Esophagus squamous epithelium (tissue), 5 donors: ENCODE measurements at regions of chr9 and their contacts with region 1.

Region 1: GRCh38 chr9:34376596-34377403 is at the start of gene MYORG:
- DNase-seq: peak; percentile 89
- H3K4me3 ChIP-seq: peak within 1 kb of the TSS; percentile 56 to 93 (median 86)
- H3K27ac ChIP-seq: peak within 1 kb of the TSS; percentile 83 to 92 (median 86)
- H3K4me1 ChIP-seq: peaks cover 28 to 60% (median 34%) of the 10 kb centered on the region in 3 donors
- H3K27me3 ChIP-seq: no peaks in the 10 kb centered on the region
- CTCF ChIP-seq: peak in 2 of 6 experiments; percentile 6 to 45
- POLR2A ChIP-seq: peak in 2 of 4 donors; percentile 12 to 86
- total RNA-seq, gene MYORG: 5.3 to 8.8 (median 5.4) TPM

Region 2: DNA sequence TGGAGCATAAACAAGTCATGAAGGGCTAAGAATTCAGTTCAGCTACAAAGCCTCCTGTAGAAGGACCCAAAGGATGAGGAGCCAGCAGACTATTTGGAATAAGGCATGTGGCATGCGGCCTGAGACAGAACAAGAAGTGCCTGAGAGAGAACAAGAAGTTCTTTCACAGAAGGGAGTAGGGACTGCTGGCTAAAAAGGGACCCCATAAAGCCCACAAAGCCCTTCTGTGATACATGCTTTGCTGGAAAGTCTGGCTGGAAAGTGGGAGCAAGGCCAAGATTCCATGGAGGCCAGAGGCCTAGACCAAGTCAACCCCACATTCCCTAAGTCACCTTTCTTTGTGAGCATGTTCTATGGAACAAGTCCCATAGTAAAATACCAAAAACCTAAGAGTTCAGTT is 292.2 kb before region 1 on chr9:
- intact Hi-C with region 1: no loop called
- DNase-seq: no peak
- H3K4me3 ChIP-seq: no peak overlapping the region
- H3K27ac ChIP-seq: peak overlapping the region in 3 of 4 donors; percentile 68 to 69 (median 68)
- H3K4me1 ChIP-seq: peaks cover 0 to 21% (median 0%) of the 10 kb centered on the region in 3 donors
- H3K27me3 ChIP-seq: no peaks in the 10 kb centered on the region
- CTCF ChIP-seq: no peak
- POLR2A ChIP-seq: no peak

Region 3: GRCh38 chr9:34332076-34332964 is 44.5 kb before region 1 on chr9:
- intact Hi-C with region 1: loop called (anchors 5 kb)
- DNase-seq: no peak
- H3K4me3 ChIP-seq: no peak overlapping the region
- H3K27ac ChIP-seq: peak overlapping the region in 1 of 4 donors; percentile 24
- H3K4me1 ChIP-seq: peaks cover 12 to 41% (median 17%) of the 10 kb centered on the region in 3 donors
- H3K27me3 ChIP-seq: no peaks in the 10 kb centered on the region
- CTCF ChIP-seq: peak in 4 of 6 experiments; percentile 31 to 54 (median 43)
- POLR2A ChIP-seq: no peak